Heart left ventricle (tissue), 16 donors: ENCODE measurements at regions of chr15 and their contacts with region 1.

Region 1: GRCh38 chr15:42920519-42921227 is at the start of gene TTBK2:
- DNase-seq: peak; percentile 99
- ATAC-seq: peak; percentile 99 to 100 (median 99)
- H3K4me3 ChIP-seq: peak within 1 kb of the TSS; percentile 67 to 98 (median 94)
- H3K27ac ChIP-seq: peak within 1 kb of the TSS; percentile 69 to 93 (median 90)
- H3K4me1 ChIP-seq: peaks cover 0 to 41% (median 16%) of the 10 kb centered on the region in 12 donors
- H3K27me3 ChIP-seq: no peaks in the 10 kb centered on the region
- CTCF ChIP-seq: peak in 6 of 12 donors; percentile 12 to 43 (median 27)
- POLR2A ChIP-seq: peak; percentile 62 to 96
- total RNA-seq, gene TTBK2: 15.1 to 27.9 (median 21.5) TPM

Region 2: GRCh38 chr15:42736793-42737528 is 183.7 kb before region 1 on chr15 and contains the start of gene CDAN1:
- intact Hi-C with region 1: loop called in 8 of 10 experiments (anchors 2 to 10 kb)
- DNase-seq: peak; percentile 93 to 97 (median 94)
- ATAC-seq: peak; percentile 89 to 99 (median 98)
- H3K4me3 ChIP-seq: peak within 1 kb of the TSS; percentile 68 to 98 (median 94)
- H3K27ac ChIP-seq: peak within 1 kb of the TSS; percentile 78 to 98 (median 88)
- H3K4me1 ChIP-seq: peaks cover 7 to 24% (median 16%) of the 10 kb centered on the region in 12 donors
- H3K27me3 ChIP-seq: no peaks in the 10 kb centered on the region
- CTCF ChIP-seq: peak in 3 of 12 donors; percentile 12 to 26 (median 17)
- POLR2A ChIP-seq: peak; percentile 4 to 80
- total RNA-seq, gene CDAN1: 4.4 to 6.9 (median 5.9) TPM

Region 3: GRCh38 chr15:42800731-42801474 is 119.8 kb before region 1 on chr15:
- intact Hi-C with region 1: loop called in 4 of 10 experiments (anchors 5 to 10 kb)
- DNase-seq: no peak
- ATAC-seq: no peak
- H3K4me3 ChIP-seq: no peak overlapping the region
- H3K27ac ChIP-seq: no peak overlapping the region
- H3K4me1 ChIP-seq: peaks cover 0 to 5% (median 0%) of the 10 kb centered on the region in 12 donors
- H3K27me3 ChIP-seq: no peaks in the 10 kb centered on the region
- CTCF ChIP-seq: peak in 3 of 12 donors; percentile 13 to 25 (median 20)
- POLR2A ChIP-seq: no peak

Region 4: GRCh38 chr15:42863572-42864239 is 57.0 kb before region 1 on chr15:
- intact Hi-C with region 1: loop called in 1 of 10 experiments (anchors 10 kb)
- DNase-seq: no peak
- ATAC-seq: no peak
- H3K4me3 ChIP-seq: no peak overlapping the region
- H3K27ac ChIP-seq: no peak overlapping the region
- H3K4me1 ChIP-seq: peaks cover 0 to 13% (median 0%) of the 10 kb centered on the region in 12 donors
- H3K27me3 ChIP-seq: no peaks in the 10 kb centered on the region
- CTCF ChIP-seq: no peak
- POLR2A ChIP-seq: no peak

Region 5: DNA sequence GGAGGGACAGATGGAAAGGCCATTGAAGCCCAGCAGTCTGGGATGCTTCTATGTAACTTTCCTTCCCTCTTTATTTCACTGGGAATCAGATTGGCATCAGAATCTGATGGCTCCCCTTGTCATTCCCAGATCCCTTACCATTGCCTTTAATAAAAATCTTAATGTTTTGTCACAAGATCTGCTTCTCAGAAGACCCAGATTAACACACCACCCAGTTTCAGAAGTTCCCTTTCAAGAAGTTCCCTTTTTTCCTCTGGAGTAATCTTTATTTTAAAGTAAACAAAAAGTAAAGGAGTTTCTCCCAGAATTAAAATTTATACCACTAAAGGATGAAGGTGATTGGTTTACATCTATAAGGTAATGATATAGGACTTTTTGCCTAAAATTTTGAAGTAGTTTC is 108.8 kb after region 1 on chr15:
- intact Hi-C with region 1: no loop called
- DNase-seq: no peak
- ATAC-seq: no peak
- H3K4me3 ChIP-seq: no peak overlapping the region
- H3K27ac ChIP-seq: peak overlapping the region in 1 of 12 donors; percentile 56
- H3K4me1 ChIP-seq: no peaks in the 10 kb centered on the region
- H3K27me3 ChIP-seq: no peaks in the 10 kb centered on the region
- CTCF ChIP-seq: no peak
- POLR2A ChIP-seq: no peak